Sciatic nerve (tissue), 2 donors: ENCODE measurements at regions of chr5 and their contacts with region 1.

Region 1: GRCh38 chr5:170420780-170421412 is 31.7 kb upstream of the KCNMB1 start:
- DNase-seq: no peak
- ATAC-seq: peak; percentile 84

Region 2: GRCh38 chr5:170225326-170226128 is 195.4 kb before region 1 on chr5:
- intact Hi-C with region 1: loop called (anchors 10 kb)
- DNase-seq: peak; percentile 91
- ATAC-seq: peak; percentile 72

Region 3: GRCh38 chr5:171633816-171634470 is 1213.0 kb after region 1 on chr5:
- intact Hi-C with region 1: no loop called
- DNase-seq: no peak
- ATAC-seq: peak; percentile 39